ENCODE measurements at regions of chr4 and their contacts with region 1.

Region 1: GRCh38 chr4:112112590-112113136 is 32.6 kb upstream of the FAM241A start:
- DNase-seq: peak; percentile 6
- ATAC-seq: peak; percentile 42
- H3K4me3 ChIP-seq: peak overlapping the region; percentile 45; the same call in 1 of the 2 replicates
- H3K27ac ChIP-seq: peak overlapping the region; percentile 98
- H3K4me1 ChIP-seq: peaks cover 46% of the 10 kb centered on the region
- H3K27me3 ChIP-seq: no peaks in the 10 kb centered on the region
- CTCF ChIP-seq: no peak

Region 2: GRCh38 chr4:112069110-112069509 is 43.6 kb before region 1 on chr4:
- CTCF ChIA-PET with region 1: no interaction called
- POLR2A ChIA-PET with region 1: no interaction called
- intact Hi-C with region 1: no loop called
- DNase-seq: peak; percentile 23
- ATAC-seq: no peak
- H3K4me3 ChIP-seq: no peak overlapping the region
- H3K27ac ChIP-seq: no peak overlapping the region
- H3K4me1 ChIP-seq: no peaks in the 10 kb centered on the region; the same call in 1 of the 2 replicates
- H3K27me3 ChIP-seq: no peaks in the 10 kb centered on the region
- CTCF ChIP-seq: no peak

Region 3: DNA sequence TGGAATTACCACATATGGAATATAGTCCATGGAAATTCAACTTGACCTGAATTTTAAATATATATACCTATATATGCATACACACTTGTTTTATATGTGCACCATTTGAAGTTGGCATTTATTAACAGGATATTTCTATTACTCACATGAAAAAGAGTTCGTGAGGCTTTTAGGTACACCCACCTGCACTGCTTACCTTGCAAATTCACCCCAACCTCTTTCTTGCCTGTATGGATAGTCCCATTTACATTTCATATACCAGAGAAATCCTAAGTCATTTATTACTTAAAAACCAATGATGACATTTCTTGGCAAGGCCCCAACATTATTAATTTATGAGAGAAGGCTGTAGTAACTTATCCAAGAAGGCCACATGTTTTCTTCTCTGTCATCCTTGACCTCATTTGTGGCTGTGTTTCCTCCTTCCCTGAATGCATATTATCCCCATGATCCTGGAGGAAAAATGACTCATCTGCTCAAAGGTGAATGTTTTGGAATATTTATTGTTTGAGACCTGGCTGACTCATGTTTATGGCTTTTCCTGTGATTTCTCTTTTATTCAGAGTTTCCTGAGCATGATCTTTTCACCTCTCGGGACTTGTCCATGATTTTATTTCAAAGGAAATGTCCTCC is 29.6 kb before region 1 on chr4:
- CTCF ChIA-PET with region 1: no interaction called
- POLR2A ChIA-PET with region 1: no interaction called
- intact Hi-C with region 1: loop called (anchors 1 kb)
- DNase-seq: peak; percentile 97
- ATAC-seq: peak; percentile 84
- H3K4me3 ChIP-seq: peak overlapping the region; percentile 33; the same call in 1 of the 2 replicates
- H3K27ac ChIP-seq: peak overlapping the region; percentile 94
- H3K4me1 ChIP-seq: peaks cover 41% of the 10 kb centered on the region
- H3K27me3 ChIP-seq: no peaks in the 10 kb centered on the region
- CTCF ChIP-seq: no peak

Region 4: GRCh38 chr4:112145820-112146813 is 33.5 kb after region 1 on chr4:
- CTCF ChIA-PET with region 1: no interaction called
- POLR2A ChIA-PET with region 1: interaction called, 8 read pairs
- intact Hi-C with region 1: loop called (anchors 2 kb)
- DNase-seq: peak; percentile 38
- ATAC-seq: peak; percentile 65
- H3K4me3 ChIP-seq: peak overlapping the region; percentile 99
- H3K27ac ChIP-seq: peak overlapping the region; percentile 43; the same call in 1 of the 2 replicates
- H3K4me1 ChIP-seq: peaks cover 9% of the 10 kb centered on the region
- H3K27me3 ChIP-seq: no peaks in the 10 kb centered on the region
- CTCF ChIP-seq: no peak

Region 5: DNA sequence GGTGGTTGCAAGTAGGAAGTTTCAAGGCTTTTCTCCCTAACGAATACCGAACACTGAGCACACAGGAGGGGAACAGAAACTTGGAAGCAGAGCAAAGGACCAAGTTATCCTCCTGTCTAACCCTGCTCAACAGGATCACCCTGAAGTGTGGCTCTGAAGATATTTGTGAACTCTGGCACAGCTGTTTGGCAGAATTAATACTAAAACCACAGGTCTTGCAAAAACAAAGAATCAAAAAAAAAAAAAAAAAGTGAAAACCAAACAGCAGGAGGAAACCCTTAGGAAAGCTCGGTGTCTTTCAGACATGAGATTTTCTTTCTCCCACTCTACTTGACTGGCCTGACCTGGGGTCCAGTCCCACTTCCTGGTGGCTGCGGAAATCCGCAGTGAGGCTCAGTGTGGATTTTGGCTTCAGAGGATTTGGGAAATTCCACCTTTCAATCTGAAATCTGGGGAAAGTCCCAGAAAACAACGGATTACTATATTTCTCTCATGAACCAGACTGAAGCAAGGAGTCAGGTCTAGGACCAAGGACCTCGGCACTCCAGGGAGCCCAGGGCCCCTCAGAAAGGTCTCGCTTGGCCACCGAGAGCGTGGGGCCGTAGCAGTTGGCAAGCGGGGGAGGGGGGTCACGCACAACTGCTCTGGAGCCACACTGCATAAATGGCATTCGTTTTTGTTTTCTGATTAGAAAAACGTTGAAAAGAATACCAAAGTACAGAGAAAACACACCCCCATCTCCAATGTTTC is 172.2 kb after region 1 on chr4:
- CTCF ChIA-PET with region 1: no interaction called
- POLR2A ChIA-PET with region 1: no interaction called
- intact Hi-C with region 1: no loop called
- DNase-seq: peak; percentile 31
- ATAC-seq: peak; percentile 25
- H3K4me3 ChIP-seq: peak overlapping the region; percentile 96
- H3K27ac ChIP-seq: 0 out of 2 replicates have a peak overlapping the region, but pooled peaks have one; percentile 3
- H3K4me1 ChIP-seq: peaks cover 3% of the 10 kb centered on the region; the same call in 1 of the 2 replicates
- H3K27me3 ChIP-seq: no peaks in the 10 kb centered on the region
- CTCF ChIP-seq: no peak

Region 6: DNA sequence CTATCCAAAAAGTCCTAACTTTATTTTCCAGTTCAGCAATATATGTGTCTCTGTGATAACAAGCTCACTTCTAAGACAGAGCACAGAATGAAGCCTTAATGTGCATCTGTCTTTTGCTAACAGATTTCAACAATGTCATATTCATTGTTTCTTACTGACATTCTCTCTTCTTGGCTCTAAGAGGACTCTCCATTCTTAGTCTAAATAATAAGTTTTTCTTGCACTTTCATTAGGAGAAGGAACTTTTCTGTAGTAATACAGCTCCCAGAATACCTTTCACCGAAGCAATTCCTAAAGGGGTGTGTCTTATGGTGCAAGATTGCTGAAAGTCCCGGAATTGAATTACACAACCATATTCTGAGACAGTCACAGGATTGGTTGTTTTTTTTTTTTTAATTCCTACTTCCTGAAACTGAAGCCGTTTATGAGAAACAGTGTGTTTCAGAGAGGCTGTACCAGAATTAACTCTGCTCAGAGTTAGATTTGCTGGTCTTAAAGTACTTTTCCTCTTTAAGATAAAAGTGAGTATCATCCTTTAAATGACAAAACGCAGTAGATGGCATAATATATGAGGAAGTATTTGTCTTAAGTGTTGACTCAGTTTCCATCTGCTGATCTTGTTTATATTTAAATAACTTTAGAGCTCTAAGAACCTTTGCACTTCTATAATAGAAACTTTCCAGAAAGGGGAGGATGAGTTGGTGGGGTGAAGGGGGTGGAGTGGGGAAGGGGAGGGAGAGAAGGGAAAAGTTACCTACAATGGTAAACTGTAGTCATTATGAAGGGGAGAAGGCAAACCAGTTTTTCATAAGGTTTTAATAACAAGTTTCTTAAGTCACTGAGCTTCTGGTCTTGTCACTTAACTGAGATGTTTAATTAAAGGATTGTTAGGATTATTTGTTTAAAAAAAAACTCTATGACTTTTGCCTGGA is 184.6 kb after region 1 on chr4 and contains the start of gene ALPK1:
- CTCF ChIA-PET with region 1: no interaction called
- POLR2A ChIA-PET with region 1: no interaction called
- intact Hi-C with region 1: no loop called
- DNase-seq: peak; percentile 72
- ATAC-seq: peak; percentile 99
- H3K4me3 ChIP-seq: peak within 1 kb of the TSS; percentile 66
- H3K27ac ChIP-seq: peak within 1 kb of the TSS; percentile 43; the same call in 1 of the 2 replicates
- H3K4me1 ChIP-seq: peaks cover 4% of the 10 kb centered on the region
- H3K27me3 ChIP-seq: no peaks in the 10 kb centered on the region
- CTCF ChIP-seq: no peak
- total RNA-seq, gene ALPK1: 4.2 and 4.3 TPM in 2 replicates

Measured in PC-3 (cell line).